ENCODE measurements at regions of chr17 and their contacts with region 1.

Region 1: DNA sequence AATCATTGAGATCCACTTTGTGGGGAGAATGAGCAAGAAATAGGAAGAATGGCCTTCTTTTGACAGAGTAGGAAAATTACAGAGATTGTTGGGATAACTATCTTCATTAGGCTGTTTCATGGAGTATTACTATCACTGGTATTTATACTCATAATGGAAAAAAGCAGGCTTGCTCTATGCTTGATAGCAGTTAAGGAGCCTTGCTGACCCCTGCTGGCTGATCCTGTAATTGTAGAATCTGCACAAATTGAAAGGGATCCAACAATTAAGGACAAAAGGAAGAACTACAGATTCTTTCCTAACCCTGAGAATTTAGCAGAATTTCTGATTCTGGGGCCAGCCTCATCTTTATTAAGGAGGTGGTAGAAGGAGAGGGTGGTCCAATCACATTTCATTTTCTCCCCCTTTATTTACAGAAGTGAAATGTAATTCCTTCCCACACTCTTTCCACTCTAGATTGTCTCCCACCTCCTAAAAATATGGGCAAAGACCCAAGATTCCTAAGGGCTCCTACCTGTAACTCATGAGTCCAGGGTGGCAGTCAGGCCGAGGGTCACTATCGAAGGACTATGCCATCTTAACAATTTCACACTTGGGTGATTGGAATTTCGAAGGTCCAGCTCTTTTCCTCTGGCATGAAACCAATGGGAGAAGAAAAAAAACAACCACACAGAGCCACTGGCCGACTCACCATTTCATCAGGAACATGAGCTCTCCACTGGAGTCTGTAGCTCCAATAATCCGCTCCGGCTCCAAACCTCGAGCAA is 26.3 kb downstream of the NFE2L1 start:
- DNase-seq: peak; percentile 85
- H3K4me3 ChIP-seq: no peak overlapping the region
- H3K27ac ChIP-seq: no peak overlapping the region
- H3K4me1 ChIP-seq: no peaks in the 10 kb centered on the region
- H3K27me3 ChIP-seq: no peaks in the 10 kb centered on the region
- CTCF ChIP-seq: peak; percentile 87

Region 2: DNA sequence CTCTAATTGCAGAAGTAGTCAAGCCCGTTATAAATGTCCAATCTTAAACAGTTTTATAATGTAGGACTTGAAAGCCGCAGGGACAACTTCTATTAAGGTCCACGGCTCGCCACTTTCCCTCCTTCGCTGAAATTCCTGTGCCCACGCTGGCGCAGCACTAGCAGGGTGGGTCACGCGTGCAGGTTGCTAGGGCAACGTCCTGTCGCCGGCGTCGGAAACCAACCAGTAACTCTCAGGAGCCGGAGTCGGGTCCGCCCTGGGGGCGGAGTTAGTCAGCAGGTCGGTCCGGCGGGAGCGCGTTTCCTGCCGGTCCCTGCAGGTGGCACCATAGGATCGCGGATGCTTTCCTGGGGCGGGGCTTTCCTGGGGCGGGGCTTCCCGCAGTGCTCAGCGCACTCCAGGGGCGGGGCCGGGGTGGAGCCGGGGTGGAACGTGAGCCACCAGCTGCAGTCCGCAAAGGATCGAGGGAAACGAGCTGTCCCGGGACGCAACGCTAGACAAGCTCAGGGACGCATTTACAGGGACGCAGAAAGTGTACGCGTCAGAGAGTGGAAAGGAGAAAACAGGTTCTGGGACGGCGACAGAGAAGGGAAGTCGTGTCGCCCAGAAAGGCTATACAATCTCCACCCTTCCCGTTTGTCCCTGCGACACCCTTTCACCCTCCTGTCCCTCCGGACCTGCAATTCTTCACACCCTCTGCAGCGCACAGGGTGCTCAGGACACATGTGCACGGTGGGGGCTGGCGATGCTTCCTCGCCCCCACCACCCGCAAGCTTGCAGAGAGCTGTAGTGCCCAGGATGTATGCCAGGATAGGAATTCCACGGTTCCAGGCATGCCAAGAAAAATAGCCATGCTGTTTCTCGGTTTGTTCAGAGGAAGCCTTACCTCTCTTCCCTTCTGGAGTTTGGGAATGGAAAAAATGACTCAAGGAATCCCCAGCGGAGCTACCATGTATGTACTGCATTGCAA is 49.3 kb before region 1 on chr17:
- CTCF ChIA-PET with region 1: interaction called, 6 read pairs
- POLR2A ChIA-PET with region 1: no interaction called
- intact Hi-C with region 1: loop called (anchors 1 kb)
- DNase-seq: peak; percentile 99
- H3K4me3 ChIP-seq: peak overlapping the region; percentile 46
- H3K27ac ChIP-seq: peak overlapping the region; percentile 57
- H3K4me1 ChIP-seq: peaks cover 44% of the 10 kb centered on the region
- H3K27me3 ChIP-seq: no peaks in the 10 kb centered on the region
- CTCF ChIP-seq: peak; percentile 95

Region 3: GRCh38 chr17:48892940-48893645 is 818.6 kb after region 1 on chr17:
- CTCF ChIA-PET with region 1: no interaction called
- POLR2A ChIA-PET with region 1: interaction called, 19 read pairs
- intact Hi-C with region 1: no loop called
- DNase-seq: peak; percentile 58
- H3K4me3 ChIP-seq: peak overlapping the region; percentile 67
- H3K27ac ChIP-seq: peak overlapping the region; percentile 75
- H3K4me1 ChIP-seq: peaks cover 11% of the 10 kb centered on the region
- H3K27me3 ChIP-seq: no peaks in the 10 kb centered on the region
- CTCF ChIP-seq: no peak